CD4-positive, alpha-beta T cell (primary cell): ENCODE measurements at regions of chr10 and their contacts with region 1.

Region 1: DNA sequence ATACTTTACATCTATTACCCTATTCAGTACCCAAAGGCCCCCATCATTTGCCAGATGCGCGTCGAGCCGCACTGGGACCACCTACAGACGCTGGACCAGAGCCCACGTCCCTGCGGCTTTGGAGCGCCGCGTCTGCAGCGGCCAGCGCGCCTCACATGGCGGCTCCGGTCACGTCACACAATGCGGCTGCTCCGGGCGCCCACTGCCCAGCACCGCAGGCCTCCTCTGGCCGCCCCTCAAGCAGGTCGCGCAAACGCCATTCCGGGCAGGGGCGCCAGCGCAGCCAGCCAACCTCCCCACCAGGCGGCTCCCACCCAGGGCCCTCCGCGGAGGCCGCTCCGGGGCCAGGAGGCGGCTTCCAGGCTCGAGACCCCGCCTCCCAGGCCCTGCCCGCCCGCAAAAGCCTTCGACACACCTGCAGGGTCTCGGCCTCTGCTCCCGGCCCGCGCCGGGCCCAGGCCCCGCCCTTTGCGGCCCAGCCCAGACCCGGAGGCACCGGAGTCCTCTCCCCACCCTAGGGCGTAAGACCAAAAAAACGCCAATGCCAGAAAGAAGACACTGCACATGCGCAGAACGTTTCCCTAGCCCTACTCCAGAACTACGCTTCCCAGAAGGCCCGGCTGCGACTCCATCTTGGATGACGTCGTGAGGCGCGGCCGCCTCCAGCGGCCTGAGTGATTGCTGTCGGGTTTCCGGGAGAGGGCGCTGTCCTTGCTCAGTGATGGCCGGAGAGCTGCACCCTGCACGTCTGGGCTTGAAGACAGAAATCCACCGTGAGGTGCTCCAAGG is at the start of gene ZNF25:
- DNase-seq: peak; percentile 95 to 99 (median 97)
- ATAC-seq: peak; percentile 89
- H3K4me3 ChIP-seq: peak within 1 kb of the TSS; percentile 73
- H3K4me3 Mint-ChIP-seq: peak within 1 kb of the TSS; percentile 93
- H3K27ac ChIP-seq: peak within 1 kb of the TSS; percentile 61 to 89
- H3K27ac Mint-ChIP-seq: peak within 1 kb of the TSS; percentile 96
- H3K4me1 ChIP-seq: peaks cover 12% of the 10 kb centered on the region
- H3K4me1 Mint-ChIP-seq: peaks cover 36% of the 10 kb centered on the region
- H3K27me3 ChIP-seq: no peaks in the 10 kb centered on the region
- H3K27me3 Mint-ChIP-seq: no peaks in the 10 kb centered on the region
- CTCF ChIP-seq: peak; percentile 95
- total RNA-seq, gene ZNF25: 4.6 to 5.4 TPM

Region 2: GRCh38 chr10:37478392-37478791 is 497.9 kb before region 1 on chr10:
- CTCF ChIA-PET with region 1: no interaction called
- POLR2A ChIA-PET with region 1: no interaction called
- intact Hi-C with region 1: no loop called
- DNase-seq: no peak
- ATAC-seq: no peak
- H3K4me3 ChIP-seq: no peak overlapping the region
- H3K4me3 Mint-ChIP-seq: no peak overlapping the region
- H3K27ac ChIP-seq: no peak overlapping the region
- H3K27ac Mint-ChIP-seq: no peak overlapping the region
- H3K4me1 ChIP-seq: no peaks in the 10 kb centered on the region
- H3K4me1 Mint-ChIP-seq: no peaks in the 10 kb centered on the region
- H3K27me3 ChIP-seq: no peaks in the 10 kb centered on the region
- H3K27me3 Mint-ChIP-seq: no peaks in the 10 kb centered on the region
- CTCF ChIP-seq: no peak

Region 3: GRCh38 chr10:37857287-37858211 is 118.7 kb before region 1 on chr10 and contains the start of gene ZNF248:
- CTCF ChIA-PET with region 1: interaction called, 20 read pairs
- POLR2A ChIA-PET with region 1: interaction called, 9 read pairs
- intact Hi-C with region 1: loop called (anchors 1 kb)
- DNase-seq: peak; percentile 88 to 99 (median 94)
- ATAC-seq: peak; percentile 94
- H3K4me3 ChIP-seq: peak within 1 kb of the TSS; percentile 98
- H3K4me3 Mint-ChIP-seq: peak within 1 kb of the TSS; percentile 97
- H3K27ac ChIP-seq: peak within 1 kb of the TSS; percentile 85 to 96
- H3K27ac Mint-ChIP-seq: peak within 1 kb of the TSS; percentile 96
- H3K4me1 ChIP-seq: peaks cover 15% of the 10 kb centered on the region
- H3K4me1 Mint-ChIP-seq: peaks cover 49% of the 10 kb centered on the region
- H3K27me3 ChIP-seq: no peaks in the 10 kb centered on the region
- H3K27me3 Mint-ChIP-seq: no peaks in the 10 kb centered on the region
- CTCF ChIP-seq: no peak
- total RNA-seq, gene ZNF248: 3.2 to 3.4 TPM

Region 4: GRCh38 chr10:38010119-38010903 is 34.0 kb after region 1 on chr10 and contains the start of gene ZNF33A:
- CTCF ChIA-PET with region 1: interaction called, 29 read pairs
- POLR2A ChIA-PET with region 1: interaction called, 58 read pairs
- intact Hi-C with region 1: loop called (anchors 1 kb)
- DNase-seq: peak; percentile 83 to 97 (median 88)
- ATAC-seq: peak; percentile 82
- H3K4me3 ChIP-seq: peak within 1 kb of the TSS; percentile 57
- H3K4me3 Mint-ChIP-seq: peak within 1 kb of the TSS; percentile 93
- H3K27ac ChIP-seq: peak within 1 kb of the TSS; percentile 97 to 99
- H3K27ac Mint-ChIP-seq: peak within 1 kb of the TSS; percentile 99
- H3K4me1 ChIP-seq: peaks cover 32% of the 10 kb centered on the region
- H3K4me1 Mint-ChIP-seq: peaks cover 45% of the 10 kb centered on the region
- H3K27me3 ChIP-seq: no peaks in the 10 kb centered on the region
- H3K27me3 Mint-ChIP-seq: no peaks in the 10 kb centered on the region
- CTCF ChIP-seq: no peak
- total RNA-seq, gene ZNF33A: 25.9 to 30.3 TPM